B cell (primary cell): ENCODE measurements at regions of chr10 and their contacts with region 1.

Region 1: DNA sequence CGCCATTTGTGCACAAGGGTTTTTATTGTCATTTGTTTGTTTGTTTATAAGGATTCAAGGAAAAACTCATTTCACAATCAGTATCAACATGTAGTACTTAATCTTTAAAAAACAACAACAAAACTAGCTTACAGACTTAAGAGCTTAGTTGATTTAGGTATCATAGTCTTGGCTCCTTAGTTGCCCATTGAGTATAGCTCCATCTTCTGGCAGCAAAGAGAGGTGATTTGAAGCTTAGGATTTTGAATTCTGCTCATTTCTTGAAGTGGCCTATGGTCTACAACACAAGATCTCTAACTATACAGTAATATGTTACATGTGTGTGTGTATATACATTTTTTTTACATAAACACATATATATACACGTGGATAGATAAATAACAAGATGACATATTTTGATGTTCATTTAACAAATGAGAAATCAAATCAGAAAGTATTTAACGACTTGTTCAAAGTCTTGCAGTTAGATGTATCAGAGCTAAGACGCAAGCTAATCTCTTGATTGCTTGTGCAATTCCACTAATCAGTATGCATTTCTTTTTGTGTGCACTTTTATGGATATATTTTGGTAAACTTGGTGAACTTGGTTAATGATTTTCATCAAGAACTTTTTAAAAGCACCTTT is 307.3 kb downstream of the CAMK1D start:
- DNase-seq: peak; percentile 71
- ATAC-seq: peak; percentile 65
- H3K4me3 ChIP-seq: no peak overlapping the region
- H3K4me3 Mint-ChIP-seq: no peak overlapping the region
- H3K27ac ChIP-seq: no peak overlapping the region
- H3K27ac Mint-ChIP-seq: no peak overlapping the region
- H3K4me1 ChIP-seq: peaks cover 5 to 6% of the 10 kb centered on the region in 2 donors
- H3K4me1 Mint-ChIP-seq: peaks cover 14% of the 10 kb centered on the region
- H3K27me3 ChIP-seq: no peaks in the 10 kb centered on the region
- H3K27me3 Mint-ChIP-seq: no peaks in the 10 kb centered on the region
- CTCF ChIP-seq: peak; percentile 86

Region 2: DNA sequence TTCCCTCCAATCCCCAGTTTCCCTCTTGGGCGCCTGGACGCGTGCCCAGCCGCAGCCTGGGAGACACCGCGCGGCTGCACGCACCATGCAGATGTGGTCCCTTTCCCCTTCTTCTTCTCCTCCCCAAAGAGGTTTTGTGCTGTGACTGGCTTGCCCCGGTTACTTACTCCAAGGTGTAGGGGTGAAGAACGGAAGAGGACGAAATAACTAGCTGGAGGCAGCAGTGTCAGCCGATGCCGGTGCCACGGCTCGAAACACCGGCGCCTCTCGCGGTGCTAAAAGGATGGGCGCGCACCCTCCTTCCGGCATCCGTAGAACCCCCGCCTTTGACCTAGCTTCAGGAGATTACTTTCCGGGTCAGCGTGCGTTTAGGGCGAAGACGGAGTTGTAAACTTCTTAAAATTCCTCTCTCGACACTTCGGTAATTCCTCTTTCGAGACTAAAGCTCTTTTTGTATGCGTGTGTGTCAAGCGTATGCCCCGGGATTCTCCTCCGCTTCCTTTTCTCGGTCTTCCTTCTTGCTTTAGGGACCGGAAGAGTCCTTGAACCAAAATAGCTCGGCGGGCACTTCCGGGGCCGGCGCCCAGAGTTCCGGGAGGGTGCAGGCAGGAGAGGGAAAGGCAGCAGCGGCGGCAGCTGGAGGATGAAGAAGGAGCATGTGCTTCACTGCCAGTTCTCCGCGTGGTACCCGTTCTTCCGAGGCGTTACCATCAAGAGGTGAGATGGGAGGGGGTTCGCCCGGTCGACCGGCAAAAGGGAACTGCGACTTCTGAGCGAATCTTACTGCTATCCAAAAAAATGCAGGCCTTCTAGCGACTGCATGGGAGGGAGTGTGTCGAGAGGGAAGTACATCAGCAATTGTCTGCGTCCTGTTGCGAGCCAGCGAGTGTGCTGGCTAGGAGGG is 460.8 kb before region 1 on chr10 and contains the starts of genes CDC123 and NUDT5:
- CTCF ChIA-PET with region 1: interaction called, 18 read pairs
- POLR2A ChIA-PET with region 1: no interaction called
- intact Hi-C with region 1: no loop called
- DNase-seq: peak; percentile 93
- ATAC-seq: peak; percentile 90
- H3K4me3 ChIP-seq: peak within 1 kb of the TSS; percentile 87 to 97 (median 95)
- H3K4me3 Mint-ChIP-seq: peak within 1 kb of the TSS; percentile 93
- H3K27ac ChIP-seq: peak within 1 kb of the TSS; percentile 91 to 94
- H3K27ac Mint-ChIP-seq: peak within 1 kb of the TSS; percentile 99
- H3K4me1 ChIP-seq: peaks cover 18 to 24% of the 10 kb centered on the region in 2 donors
- H3K4me1 Mint-ChIP-seq: peaks cover 42% of the 10 kb centered on the region
- H3K27me3 ChIP-seq: no peaks in the 10 kb centered on the region
- H3K27me3 Mint-ChIP-seq: no peaks in the 10 kb centered on the region
- CTCF ChIP-seq: no peak
- total RNA-seq, gene CDC123: 56.0 and 62.0 TPM in 2 replicates
- total RNA-seq, gene NUDT5: 39.1 and 39.9 TPM in 2 replicates

Region 3: DNA sequence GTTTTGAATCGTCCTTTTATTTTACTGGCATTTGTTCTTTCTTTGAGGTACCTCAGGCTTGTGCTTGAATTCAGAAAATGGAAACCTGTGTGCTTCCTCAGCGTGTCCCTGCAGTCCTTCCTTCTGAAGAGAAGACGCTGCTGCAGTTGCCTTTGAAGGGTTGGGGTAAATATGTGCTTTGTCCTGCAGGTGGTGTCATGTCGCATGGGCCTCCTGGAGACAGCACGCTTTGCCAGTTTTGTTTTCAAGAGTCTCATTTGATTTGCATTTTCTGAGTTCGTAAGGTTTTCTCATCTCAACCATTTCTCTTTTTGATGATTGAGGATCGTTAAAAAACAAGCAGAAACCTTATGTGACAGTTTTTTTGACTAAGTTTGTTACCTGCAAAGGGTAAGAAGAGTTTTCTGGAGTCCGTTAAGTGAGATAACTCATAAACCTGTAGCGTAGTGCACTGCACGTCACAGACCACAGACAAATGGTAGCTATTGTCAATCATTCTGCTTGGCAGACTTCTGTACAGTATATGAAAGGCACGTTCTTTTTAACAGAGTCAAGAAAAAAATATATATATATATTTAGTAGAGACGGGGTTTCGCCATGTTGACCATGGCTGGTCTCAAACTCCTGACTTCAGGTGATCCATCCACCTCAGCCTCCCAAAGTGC is 403.6 kb before region 1 on chr10:
- CTCF ChIA-PET with region 1: interaction called, 75 read pairs
- POLR2A ChIA-PET with region 1: interaction called, 3 read pairs
- intact Hi-C with region 1: loop called (anchors 1 kb)
- DNase-seq: peak; percentile 86
- ATAC-seq: peak; percentile 99
- H3K4me3 ChIP-seq: peak overlapping the region in 2 of 5 experiments; percentile 23 to 53
- H3K4me3 Mint-ChIP-seq: peak overlapping the region; percentile 83
- H3K27ac ChIP-seq: peak overlapping the region; percentile 57
- H3K27ac Mint-ChIP-seq: peak overlapping the region; percentile 93
- H3K4me1 ChIP-seq: peaks cover 14% of the 10 kb centered on the region in 2 donors
- H3K4me1 Mint-ChIP-seq: peaks cover 17% of the 10 kb centered on the region
- H3K27me3 ChIP-seq: no peaks in the 10 kb centered on the region
- H3K27me3 Mint-ChIP-seq: no peaks in the 10 kb centered on the region
- CTCF ChIP-seq: peak; percentile 82

Region 4: DNA sequence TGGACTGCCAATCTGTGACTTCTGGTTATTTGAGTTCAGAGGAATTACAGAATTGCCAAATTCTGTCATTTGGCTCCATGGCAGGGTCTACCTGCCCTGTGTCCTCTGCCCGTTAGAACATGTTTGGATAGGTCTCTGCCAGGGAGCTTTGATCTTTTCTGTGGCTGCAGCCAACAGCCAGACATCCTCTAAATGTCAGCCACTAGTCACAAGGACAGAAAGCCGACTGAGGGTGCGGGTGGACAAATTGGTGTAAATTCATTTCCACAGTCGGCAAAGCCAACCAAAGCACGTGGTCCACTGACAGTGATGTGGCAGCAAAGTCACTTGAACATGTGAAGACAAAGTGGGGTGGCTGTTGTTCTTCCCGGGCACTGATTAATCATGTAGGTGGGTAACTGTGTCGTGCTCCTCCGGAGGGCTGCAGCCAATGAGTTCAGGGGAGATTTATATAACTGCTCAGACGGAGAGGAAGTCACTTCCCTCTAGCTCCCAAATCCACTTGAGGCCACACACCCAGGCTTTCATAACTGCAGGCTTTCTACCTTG is 334.0 kb before region 1 on chr10:
- CTCF ChIA-PET with region 1: interaction called, 14 read pairs
- POLR2A ChIA-PET with region 1: no interaction called
- intact Hi-C with region 1: loop called (anchors 1 kb)
- DNase-seq: no peak
- ATAC-seq: no peak
- H3K4me3 ChIP-seq: no peak overlapping the region
- H3K4me3 Mint-ChIP-seq: no peak overlapping the region
- H3K27ac ChIP-seq: no peak overlapping the region
- H3K27ac Mint-ChIP-seq: no peak overlapping the region
- H3K4me1 ChIP-seq: peaks cover 4 to 15% of the 10 kb centered on the region in 2 donors
- H3K4me1 Mint-ChIP-seq: peaks cover 29% of the 10 kb centered on the region
- H3K27me3 ChIP-seq: no peaks in the 10 kb centered on the region
- H3K27me3 Mint-ChIP-seq: no peaks in the 10 kb centered on the region
- CTCF ChIP-seq: no peak

Region 5: GRCh38 chr10:12474727-12475580 is 181.7 kb before region 1 on chr10:
- CTCF ChIA-PET with region 1: no interaction called
- POLR2A ChIA-PET with region 1: no interaction called
- intact Hi-C with region 1: no loop called
- DNase-seq: no peak
- ATAC-seq: no peak
- H3K4me3 ChIP-seq: no peak overlapping the region
- H3K4me3 Mint-ChIP-seq: no peak overlapping the region
- H3K27ac ChIP-seq: no peak overlapping the region
- H3K27ac Mint-ChIP-seq: no peak overlapping the region
- H3K4me1 ChIP-seq: peaks cover 10% of the 10 kb centered on the region in 2 donors
- H3K4me1 Mint-ChIP-seq: peaks cover 51% of the 10 kb centered on the region
- H3K27me3 ChIP-seq: no peaks in the 10 kb centered on the region
- H3K27me3 Mint-ChIP-seq: no peaks in the 10 kb centered on the region
- CTCF ChIP-seq: no peak

Region 6: DNA sequence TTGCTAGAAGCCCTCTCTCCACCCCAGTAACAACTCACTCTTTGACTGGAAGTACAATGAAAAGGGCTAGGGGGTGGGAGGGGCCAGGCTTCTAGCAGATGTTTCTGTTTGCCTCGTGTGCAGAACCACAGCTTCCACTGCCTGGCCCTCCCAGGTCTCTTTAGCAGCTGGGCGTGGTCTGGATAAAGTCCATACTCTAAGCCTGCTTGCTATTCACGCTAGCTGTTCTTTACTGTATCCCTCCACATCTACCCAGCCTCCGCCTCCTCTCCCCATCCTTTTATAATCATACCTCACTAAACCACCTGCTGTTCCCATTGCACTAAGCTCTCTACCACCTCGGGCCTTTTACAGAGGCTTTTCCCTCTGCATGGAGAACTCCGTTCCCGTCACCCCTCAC is 18.5 kb before region 1 on chr10:
- CTCF ChIA-PET with region 1: interaction called, 21 read pairs
- POLR2A ChIA-PET with region 1: no interaction called
- intact Hi-C with region 1: no loop called
- DNase-seq: no peak
- ATAC-seq: no peak
- H3K4me3 ChIP-seq: no peak overlapping the region
- H3K4me3 Mint-ChIP-seq: no peak overlapping the region
- H3K27ac ChIP-seq: no peak overlapping the region
- H3K27ac Mint-ChIP-seq: no peak overlapping the region
- H3K4me1 ChIP-seq: peaks cover 0 to 3% of the 10 kb centered on the region in 2 donors
- H3K4me1 Mint-ChIP-seq: peaks cover 28% of the 10 kb centered on the region
- H3K27me3 ChIP-seq: no peaks in the 10 kb centered on the region
- H3K27me3 Mint-ChIP-seq: no peaks in the 10 kb centered on the region
- CTCF ChIP-seq: no peak

Region 7: GRCh38 chr10:12710594-12711349 is 54.1 kb after region 1 on chr10:
- CTCF ChIA-PET with region 1: interaction called, 26 read pairs
- POLR2A ChIA-PET with region 1: no interaction called
- intact Hi-C with region 1: no loop called
- DNase-seq: peak; percentile 81
- ATAC-seq: peak; percentile 88
- H3K4me3 ChIP-seq: no peak overlapping the region
- H3K4me3 Mint-ChIP-seq: no peak overlapping the region
- H3K27ac ChIP-seq: peak overlapping the region in 1 of 2 donors; percentile 54
- H3K27ac Mint-ChIP-seq: peak overlapping the region; percentile 59
- H3K4me1 ChIP-seq: peaks cover 0 to 3% of the 10 kb centered on the region in 2 donors
- H3K4me1 Mint-ChIP-seq: peaks cover 16% of the 10 kb centered on the region
- H3K27me3 ChIP-seq: no peaks in the 10 kb centered on the region
- H3K27me3 Mint-ChIP-seq: no peaks in the 10 kb centered on the region
- CTCF ChIP-seq: peak; percentile 98